ENCODE measurements at regions of chr6 and their contacts with region 1.

Region 1: DNA sequence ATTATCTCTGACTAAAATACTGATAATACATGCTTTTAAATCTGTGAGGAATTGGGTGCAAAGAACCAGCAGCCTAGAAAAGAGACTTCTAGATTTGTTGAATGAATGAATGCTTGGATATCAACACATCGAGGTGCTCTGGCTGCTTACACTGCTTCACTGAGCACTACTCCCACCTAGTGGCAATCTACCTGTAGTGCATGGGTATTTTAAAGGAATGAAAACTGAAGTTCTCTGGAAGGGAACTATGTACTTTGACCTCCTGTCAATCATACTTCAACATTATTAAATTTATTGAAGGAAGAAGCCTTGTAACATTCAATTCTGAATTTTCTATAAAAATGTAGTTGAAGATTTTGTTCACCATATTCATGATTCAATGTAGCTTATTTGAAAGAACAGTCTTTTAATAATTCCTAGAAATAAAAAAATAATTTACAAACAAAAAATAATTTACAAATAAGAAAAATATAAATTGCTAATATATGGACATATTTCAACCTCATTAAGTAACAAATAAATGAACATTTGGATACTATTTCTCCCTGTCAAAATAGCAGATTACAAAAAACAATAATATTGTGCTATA is 111.2 kb upstream of the MMS22L start:
- DNase-seq: peak in 12 of 14 experiments; percentile 3 to 75 (median 26)
- ATAC-seq: peak; percentile 76
- H3K4me3 ChIP-seq: no peak overlapping the region
- H3K4me3 Mint-ChIP-seq: no peak overlapping the region
- H3K27ac ChIP-seq: no peak overlapping the region
- H3K27ac Mint-ChIP-seq: no peak overlapping the region
- H3K4me1 ChIP-seq: no peaks in the 10 kb centered on the region
- H3K4me1 Mint-ChIP-seq: no peaks in the 10 kb centered on the region
- H3K27me3 ChIP-seq: peaks cover 0 to 4% of the 10 kb centered on the region in 2 experiments
- H3K27me3 Mint-ChIP-seq: peaks cover 21% of the 10 kb centered on the region
- CTCF ChIP-seq: peak; percentile 96

Region 2: DNA sequence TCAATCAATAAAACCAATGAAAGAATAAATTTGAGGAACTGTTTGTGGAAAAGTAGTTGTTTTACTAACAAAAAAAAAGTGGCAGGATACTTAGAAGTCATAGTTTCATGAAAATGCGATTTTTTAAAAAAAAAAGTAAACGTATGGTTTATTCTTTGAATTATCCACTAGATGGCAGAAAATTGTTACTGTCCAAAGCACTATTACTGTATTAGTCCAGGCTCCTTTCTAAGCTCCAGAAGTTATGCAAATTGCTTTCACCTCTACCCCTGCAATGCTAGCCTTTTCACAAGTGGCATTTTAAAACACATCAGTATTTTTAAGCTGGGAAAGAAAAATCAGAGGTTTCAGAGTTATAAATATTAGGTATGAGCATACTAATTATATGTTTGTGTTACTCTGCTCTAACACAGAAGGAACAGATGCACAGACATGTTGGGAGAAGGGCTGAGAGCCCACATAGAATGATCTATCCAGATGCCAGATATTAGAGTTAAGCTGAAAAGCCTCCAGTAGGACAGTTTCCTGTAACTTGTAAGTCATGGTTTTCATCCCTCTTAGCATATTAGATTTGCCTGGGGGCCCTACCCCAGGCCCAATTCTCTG is 767.4 kb before region 1 on chr6:
- CTCF ChIA-PET with region 1: no interaction called
- POLR2A ChIA-PET with region 1: no interaction called
- intact Hi-C with region 1: loop called (anchors 2 to 5 kb)
- DNase-seq: peak in 3 of 14 experiments; percentile 21 to 39 (median 30)
- ATAC-seq: peak; percentile 41
- H3K4me3 ChIP-seq: no peak overlapping the region
- H3K4me3 Mint-ChIP-seq: no peak overlapping the region
- H3K27ac ChIP-seq: no peak overlapping the region
- H3K27ac Mint-ChIP-seq: no peak overlapping the region
- H3K4me1 ChIP-seq: no peaks in the 10 kb centered on the region
- H3K4me1 Mint-ChIP-seq: no peaks in the 10 kb centered on the region
- H3K27me3 ChIP-seq: no peaks in the 10 kb centered on the region
- H3K27me3 Mint-ChIP-seq: peaks cover 18% of the 10 kb centered on the region
- CTCF ChIP-seq: peak; percentile 57

Region 3: DNA sequence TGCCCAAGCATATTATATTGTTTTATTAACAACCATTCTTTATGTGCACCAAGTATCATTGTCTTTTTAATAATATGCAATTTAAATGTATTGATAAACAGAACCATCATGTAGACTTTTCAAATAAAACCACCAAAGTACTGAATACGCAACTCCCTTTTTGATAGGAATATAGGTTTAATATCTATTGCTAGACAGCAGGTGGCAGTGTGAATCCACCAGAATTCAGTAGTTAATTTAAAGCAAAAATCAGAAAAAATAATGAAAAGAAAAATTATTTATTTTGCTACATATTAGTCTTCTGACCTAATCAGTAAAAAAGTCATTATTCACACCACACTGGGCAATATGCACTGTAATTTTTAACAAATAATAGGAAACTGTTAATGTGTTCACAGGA is 326.0 kb before region 1 on chr6:
- CTCF ChIA-PET with region 1: no interaction called
- POLR2A ChIA-PET with region 1: no interaction called
- intact Hi-C with region 1: loop called (anchors 1 to 2 kb)
- DNase-seq: peak in 4 of 14 experiments; percentile 5 to 34 (median 15)
- ATAC-seq: no peak
- H3K4me3 ChIP-seq: no peak overlapping the region
- H3K4me3 Mint-ChIP-seq: no peak overlapping the region
- H3K27ac ChIP-seq: no peak overlapping the region
- H3K27ac Mint-ChIP-seq: no peak overlapping the region
- H3K4me1 ChIP-seq: no peaks in the 10 kb centered on the region
- H3K4me1 Mint-ChIP-seq: no peaks in the 10 kb centered on the region
- H3K27me3 ChIP-seq: no peaks in the 10 kb centered on the region
- H3K27me3 Mint-ChIP-seq: no peaks in the 10 kb centered on the region
- CTCF ChIP-seq: peak; percentile 39

Region 4: DNA sequence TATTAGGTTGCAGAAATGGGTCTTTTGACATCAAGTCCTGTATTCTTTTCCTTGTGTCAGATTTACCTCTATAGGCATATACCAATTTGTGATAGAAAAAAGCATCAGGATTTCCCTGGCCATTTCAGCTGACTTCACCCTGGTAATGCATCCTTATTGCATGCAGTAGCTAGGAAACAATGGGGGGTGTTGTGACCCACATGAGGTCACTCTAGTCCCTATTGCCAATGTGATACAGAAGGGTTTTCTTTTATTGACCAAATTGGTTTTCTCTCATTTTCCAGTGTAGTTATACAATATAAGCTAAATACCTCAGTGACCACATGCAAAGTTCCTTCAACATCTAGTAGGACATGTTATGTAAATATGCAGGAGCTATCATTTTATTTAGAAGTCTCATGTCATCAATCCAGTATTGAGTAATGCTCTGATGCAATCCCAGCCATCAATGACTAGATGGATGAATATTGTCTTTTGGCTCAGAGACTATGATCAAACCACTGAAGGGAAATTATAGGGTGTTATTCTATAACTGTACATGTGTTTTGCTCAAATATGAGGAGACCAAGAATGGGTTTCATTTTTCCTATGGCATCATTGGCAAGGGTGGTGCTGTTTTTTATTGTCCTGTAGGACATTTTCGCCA is 292.0 kb before region 1 on chr6:
- CTCF ChIA-PET with region 1: no interaction called
- POLR2A ChIA-PET with region 1: no interaction called
- intact Hi-C with region 1: no loop called
- DNase-seq: no peak
- ATAC-seq: no peak
- H3K4me3 ChIP-seq: no peak overlapping the region
- H3K4me3 Mint-ChIP-seq: no peak overlapping the region
- H3K27ac ChIP-seq: no peak overlapping the region
- H3K27ac Mint-ChIP-seq: no peak overlapping the region
- H3K4me1 ChIP-seq: no peaks in the 10 kb centered on the region
- H3K4me1 Mint-ChIP-seq: no peaks in the 10 kb centered on the region
- H3K27me3 ChIP-seq: no peaks in the 10 kb centered on the region
- H3K27me3 Mint-ChIP-seq: no peaks in the 10 kb centered on the region
- CTCF ChIP-seq: no peak

Region 5: DNA sequence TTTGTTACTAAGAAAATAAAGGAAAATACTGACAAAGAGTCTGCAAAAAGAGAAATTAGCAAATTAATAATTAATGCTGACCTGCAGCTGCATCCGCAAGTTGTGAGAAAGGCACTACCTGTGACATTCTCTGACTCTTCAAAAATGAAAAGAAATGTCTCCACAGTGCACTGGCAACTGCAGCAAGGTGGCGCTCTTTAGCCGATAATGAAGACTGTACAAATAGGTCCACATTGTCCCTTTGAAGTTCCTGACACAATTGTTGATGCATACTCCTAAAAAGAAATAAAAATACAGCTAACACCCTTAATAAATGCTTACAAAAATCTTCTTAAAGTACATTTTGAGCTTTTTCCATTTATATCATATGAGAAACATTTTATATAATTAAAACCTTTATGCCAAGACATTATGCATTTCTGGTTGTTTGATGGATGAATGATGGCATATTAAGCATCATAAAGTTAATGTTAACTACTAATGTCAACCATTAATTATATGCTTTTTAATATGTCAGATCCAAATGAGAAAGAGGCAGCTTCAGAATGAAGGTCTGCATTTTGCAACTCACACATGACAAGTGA is 207.7 kb before region 1 on chr6:
- CTCF ChIA-PET with region 1: no interaction called
- POLR2A ChIA-PET with region 1: no interaction called
- intact Hi-C with region 1: loop called (anchors 1 kb)
- DNase-seq: peak; percentile 36 to 77 (median 56)
- ATAC-seq: peak; percentile 77
- H3K4me3 ChIP-seq: no peak overlapping the region
- H3K4me3 Mint-ChIP-seq: no peak overlapping the region
- H3K27ac ChIP-seq: no peak overlapping the region
- H3K27ac Mint-ChIP-seq: no peak overlapping the region
- H3K4me1 ChIP-seq: no peaks in the 10 kb centered on the region
- H3K4me1 Mint-ChIP-seq: no peaks in the 10 kb centered on the region
- H3K27me3 ChIP-seq: no peaks in the 10 kb centered on the region
- H3K27me3 Mint-ChIP-seq: no peaks in the 10 kb centered on the region
- CTCF ChIP-seq: peak; percentile 97

Region 6: DNA sequence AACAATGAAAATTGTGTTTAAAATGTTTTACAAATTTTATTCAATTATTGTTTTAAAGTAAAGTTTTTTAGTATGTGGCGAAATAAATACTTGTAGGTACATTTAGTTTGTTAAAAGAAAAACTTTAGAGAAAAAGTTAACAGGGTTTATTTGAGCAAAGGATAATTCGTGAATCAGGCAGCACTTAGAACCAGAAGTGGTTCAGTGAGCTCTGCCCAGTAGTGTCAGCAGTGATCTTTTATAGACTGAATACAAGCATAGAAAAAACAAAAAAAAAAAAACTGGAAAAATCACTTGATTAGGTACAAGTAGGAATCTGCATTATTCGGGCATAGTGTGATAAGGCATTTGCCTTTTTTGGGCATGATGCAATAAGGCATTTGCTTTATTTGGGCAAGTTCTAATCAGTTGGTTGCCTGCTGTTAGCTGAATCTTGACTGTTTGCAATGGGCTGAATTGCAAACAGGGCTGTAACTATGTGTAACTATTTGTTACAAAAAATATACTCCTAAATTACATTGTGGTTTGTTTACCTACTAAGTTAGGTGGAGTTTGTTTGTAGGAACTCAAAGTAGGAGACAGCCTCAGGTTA is 11.7 kb after region 1 on chr6:
- CTCF ChIA-PET with region 1: no interaction called
- POLR2A ChIA-PET with region 1: no interaction called
- intact Hi-C with region 1: no loop called
- DNase-seq: no peak
- ATAC-seq: no peak
- H3K4me3 ChIP-seq: no peak overlapping the region
- H3K4me3 Mint-ChIP-seq: no peak overlapping the region
- H3K27ac ChIP-seq: no peak overlapping the region
- H3K27ac Mint-ChIP-seq: no peak overlapping the region
- H3K4me1 ChIP-seq: no peaks in the 10 kb centered on the region
- H3K4me1 Mint-ChIP-seq: no peaks in the 10 kb centered on the region
- H3K27me3 ChIP-seq: no peaks in the 10 kb centered on the region
- H3K27me3 Mint-ChIP-seq: peaks cover 18% of the 10 kb centered on the region
- CTCF ChIP-seq: no peak

Region 7: GRCh38 chr6:97450087-97450486 is 55.8 kb after region 1 on chr6:
- CTCF ChIA-PET with region 1: no interaction called
- POLR2A ChIA-PET with region 1: no interaction called
- intact Hi-C with region 1: no loop called
- DNase-seq: no peak
- ATAC-seq: no peak
- H3K4me3 ChIP-seq: no peak overlapping the region
- H3K4me3 Mint-ChIP-seq: no peak overlapping the region
- H3K27ac ChIP-seq: no peak overlapping the region
- H3K27ac Mint-ChIP-seq: no peak overlapping the region
- H3K4me1 ChIP-seq: no peaks in the 10 kb centered on the region
- H3K4me1 Mint-ChIP-seq: no peaks in the 10 kb centered on the region
- H3K27me3 ChIP-seq: peaks cover 0 to 2% of the 10 kb centered on the region in 2 experiments
- H3K27me3 Mint-ChIP-seq: peaks cover 22% of the 10 kb centered on the region
- CTCF ChIP-seq: no peak